Left cardiac atrium (tissue), 4 donors: ENCODE measurements at regions of chr2 and their contacts with region 1.

Region 1: DNA sequence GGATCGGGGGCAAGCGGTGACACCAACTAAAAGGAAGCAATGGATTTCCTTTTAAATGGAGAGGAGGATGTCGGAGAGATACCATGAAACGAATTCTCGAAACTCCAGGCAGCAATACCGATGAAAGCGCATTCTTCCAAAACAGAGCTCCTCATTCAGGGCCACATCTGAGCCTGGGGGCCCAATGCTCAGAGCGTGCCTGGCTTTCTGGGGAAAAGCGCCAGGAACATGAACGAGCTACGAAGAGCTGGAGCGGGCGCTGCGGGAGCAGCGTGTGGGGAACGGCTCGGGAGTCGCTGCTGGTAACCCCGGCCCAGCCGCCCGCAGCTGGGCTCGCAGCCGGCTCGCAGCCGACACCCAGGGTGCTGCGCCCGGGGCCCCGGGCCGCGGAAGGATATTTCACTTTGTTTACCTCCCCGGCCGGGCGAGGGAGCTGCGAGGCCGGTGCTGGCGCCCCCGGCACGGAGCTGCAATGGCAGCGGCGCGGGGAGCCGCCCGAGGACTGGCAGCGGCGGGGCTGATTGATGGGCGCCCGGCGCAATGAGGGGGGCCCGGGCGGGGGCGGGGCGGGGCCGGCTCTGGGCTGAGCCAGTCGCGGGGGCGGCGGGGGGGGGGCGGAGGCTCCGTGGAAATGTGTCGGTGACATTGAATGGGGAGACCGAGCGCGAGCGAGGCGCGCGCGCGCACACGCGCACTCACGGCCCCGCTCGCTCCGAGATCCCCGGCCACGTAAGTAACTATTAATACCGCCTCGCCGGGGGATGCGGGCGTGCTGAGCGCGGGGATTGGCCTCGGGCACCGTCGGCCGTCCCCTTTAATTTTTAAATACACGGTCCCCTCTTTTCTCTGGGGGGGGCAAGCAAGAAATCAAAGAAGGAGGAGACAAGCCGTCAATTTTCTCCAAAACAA is at the start of gene TRIB2:
- DNase-seq: peak; percentile 92
- ATAC-seq: peak; percentile 85 to 89
- total RNA-seq, gene TRIB2: 32.5 to 43.6 TPM

Region 2: DNA sequence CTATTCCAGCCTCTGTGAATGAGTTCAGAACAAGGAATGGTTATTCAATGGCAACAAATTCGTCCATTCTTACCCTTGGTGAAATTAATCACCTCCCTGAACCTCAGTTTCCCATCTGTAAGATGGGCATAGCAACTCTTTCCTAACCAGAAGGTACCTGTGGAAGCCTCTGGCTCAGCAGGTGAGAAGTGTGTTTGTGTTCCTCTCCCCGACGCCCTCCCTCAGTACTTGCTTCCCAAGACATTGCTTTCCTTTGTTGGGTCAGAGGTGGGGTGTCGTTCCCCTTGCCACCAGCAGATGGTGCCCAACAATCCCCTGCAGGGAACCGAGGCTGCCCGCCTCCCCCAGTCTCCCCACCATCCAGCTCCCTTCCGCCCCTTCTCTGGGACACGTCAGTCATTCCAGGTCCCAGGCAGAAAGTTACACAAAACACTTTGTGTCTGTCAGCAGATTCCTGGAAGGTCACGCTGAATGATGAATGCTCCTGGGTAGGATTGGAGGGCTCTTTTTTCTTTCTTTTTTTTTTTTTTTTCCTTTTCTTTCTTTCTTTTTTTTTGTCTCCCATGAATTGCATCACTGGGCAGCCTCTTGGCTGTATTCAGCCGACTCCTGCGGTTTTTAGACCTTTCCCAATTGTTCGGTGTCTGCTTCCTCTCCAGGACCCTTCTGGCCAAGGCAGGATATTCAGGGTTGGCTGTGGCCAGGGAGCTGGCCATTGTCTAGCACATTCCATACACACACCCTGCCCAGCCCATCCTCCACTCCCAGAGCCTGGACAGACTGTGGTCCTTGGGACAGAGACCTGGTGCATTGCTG is 852.8 kb before region 1 on chr2:
- intact Hi-C with region 1: loop called (anchors 2 to 10 kb)
- DNase-seq: peak; percentile 89
- ATAC-seq: peak; percentile 94 to 95

Region 3: DNA sequence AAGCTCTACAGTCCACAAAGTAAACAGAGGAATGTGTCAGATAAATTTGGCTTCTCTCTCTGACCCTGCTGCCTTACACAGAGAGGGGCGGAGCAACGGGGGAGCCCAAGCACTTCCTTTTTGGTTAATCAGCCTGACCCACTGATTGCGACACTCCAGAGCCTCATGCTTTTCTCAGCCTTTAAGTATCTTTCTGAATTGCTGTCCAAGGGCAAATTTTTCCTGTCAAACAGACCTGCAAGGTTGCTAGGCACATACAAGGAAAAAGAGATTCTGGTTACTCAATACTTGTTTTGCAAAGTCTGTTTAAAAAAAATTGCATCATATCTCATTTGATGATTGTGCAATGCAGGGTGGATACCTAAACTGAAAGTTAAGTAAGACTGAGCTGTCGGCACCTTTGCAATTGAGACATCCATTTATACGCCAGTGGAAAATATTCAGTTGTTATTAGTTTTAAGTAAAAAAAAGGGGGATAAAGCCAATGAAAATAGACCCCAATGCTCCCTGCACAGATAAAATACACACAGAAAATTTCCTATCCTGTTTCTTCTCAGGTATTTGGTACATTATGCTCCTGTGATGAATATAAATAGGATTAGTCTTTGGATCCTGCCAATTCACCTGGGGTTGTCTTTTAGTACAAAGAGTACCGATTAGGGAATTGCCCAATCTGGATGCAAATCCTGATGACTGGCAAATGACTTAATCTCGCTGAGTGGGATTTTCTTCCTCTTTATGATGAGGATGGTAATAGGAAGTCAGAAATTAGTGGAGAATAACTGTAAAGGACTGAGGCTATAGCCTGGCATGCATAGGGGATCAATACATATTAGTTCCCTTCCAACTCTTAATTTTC is 260.0 kb before region 1 on chr2:
- intact Hi-C with region 1: loop called in 1 of 2 experiments (anchors 10 kb)
- DNase-seq: peak; percentile 94
- ATAC-seq: peak; percentile 97 to 98

Region 4: GRCh38 chr2:12543978-12544558 is 172.5 kb before region 1 on chr2:
- intact Hi-C with region 1: loop called in 1 of 2 experiments (anchors 10 kb)
- DNase-seq: no peak
- ATAC-seq: peak; percentile 43 to 64

Region 5: GRCh38 chr2:13006829-13007717 is 290.5 kb after region 1 on chr2:
- intact Hi-C with region 1: loop called in 1 of 2 experiments (anchors 2 kb)
- DNase-seq: peak; percentile 51
- ATAC-seq: peak; percentile 92 to 94